Activated T-helper 2 cell treated with anti-CD3 and anti-CD28 coated beads, Interferon-gamma antibody, Interleukin-2, Interleukin-4, amounts not matched to agents 10 μg/mL and 5 μg/mL and 100 μg/mL, durations not matched to agents 14 hours and 24 hours and 36 hours (primary cell): ENCODE measurements at regions of chr11 and their contacts with region 1.

Region 1: GRCh38 chr11:15819679-15820286 is 536.6 kb downstream of the SOX6 start:
- DNase-seq: peak; percentile 12
- H3K4me3 Mint-ChIP-seq: no peak overlapping the region
- H3K27ac Mint-ChIP-seq: peak overlapping the region; percentile 61
- H3K4me1 Mint-ChIP-seq: peaks cover 43% of the 10 kb centered on the region
- H3K27me3 Mint-ChIP-seq: peaks cover 2% of the 10 kb centered on the region

Region 2: GRCh38 chr11:15650105-15650938 is 169.5 kb before region 1 on chr11:
- intact Hi-C with region 1: loop called (anchors 2 kb)
- DNase-seq: peak; percentile 68
- H3K4me3 Mint-ChIP-seq: no peak overlapping the region
- H3K27ac Mint-ChIP-seq: no peak overlapping the region
- H3K4me1 Mint-ChIP-seq: peaks cover 3% of the 10 kb centered on the region
- H3K27me3 Mint-ChIP-seq: peaks cover 19% of the 10 kb centered on the region

Region 3: DNA sequence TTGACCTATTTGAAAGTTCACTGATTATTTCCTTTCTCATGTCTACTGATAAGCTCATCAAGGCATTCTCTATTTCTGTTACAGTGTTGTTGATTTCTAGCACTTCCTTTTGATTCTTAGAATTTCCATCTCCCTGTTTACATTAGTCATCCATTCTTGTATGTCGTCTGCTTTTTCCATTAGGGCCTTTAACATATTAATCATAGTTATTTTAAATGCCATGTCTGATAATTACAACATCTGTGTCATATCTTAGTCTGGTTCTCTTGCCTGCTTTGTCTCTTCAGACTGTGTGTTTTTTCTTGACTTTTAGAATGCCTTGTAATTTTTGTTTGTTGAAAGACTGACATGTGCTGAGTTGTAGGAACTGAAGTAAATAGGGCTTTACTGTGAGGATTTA is 65.6 kb before region 1 on chr11:
- intact Hi-C with region 1: loop called (anchors 2 kb)
- DNase-seq: no peak
- H3K4me3 Mint-ChIP-seq: no peak overlapping the region
- H3K27ac Mint-ChIP-seq: peak overlapping the region; percentile 64
- H3K4me1 Mint-ChIP-seq: peaks cover 7% of the 10 kb centered on the region
- H3K27me3 Mint-ChIP-seq: no peaks in the 10 kb centered on the region

Region 4: GRCh38 chr11:15794361-15795150 is 25.2 kb before region 1 on chr11:
- intact Hi-C with region 1: loop called (anchors 1 kb)
- DNase-seq: no peak
- H3K4me3 Mint-ChIP-seq: no peak overlapping the region
- H3K27ac Mint-ChIP-seq: peak overlapping the region; percentile 84
- H3K4me1 Mint-ChIP-seq: peaks cover 11% of the 10 kb centered on the region
- H3K27me3 Mint-ChIP-seq: no peaks in the 10 kb centered on the region

Region 5: DNA sequence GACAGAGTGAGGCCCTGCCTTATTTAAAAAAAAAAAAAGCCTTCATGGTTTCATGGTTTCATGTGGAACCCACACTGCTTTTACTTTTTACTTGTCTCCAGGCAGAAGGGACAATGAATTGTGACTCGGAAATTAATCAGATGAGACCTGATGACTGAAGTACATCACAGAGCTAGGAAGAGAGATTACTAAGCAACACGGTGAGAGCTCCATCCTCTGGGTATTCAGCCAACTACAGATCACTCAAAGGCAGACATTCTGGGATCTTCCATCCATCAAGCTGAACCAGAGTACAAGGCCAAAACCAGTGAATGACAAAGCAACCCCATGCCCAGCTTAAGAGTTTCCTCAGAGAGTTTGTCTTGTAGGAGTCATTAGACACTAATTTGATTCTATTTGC is 103.4 kb after region 1 on chr11:
- intact Hi-C with region 1: no loop called
- DNase-seq: no peak
- H3K4me3 Mint-ChIP-seq: no peak overlapping the region
- H3K27ac Mint-ChIP-seq: no peak overlapping the region
- H3K4me1 Mint-ChIP-seq: no peaks in the 10 kb centered on the region
- H3K27me3 Mint-ChIP-seq: no peaks in the 10 kb centered on the region

Region 6: DNA sequence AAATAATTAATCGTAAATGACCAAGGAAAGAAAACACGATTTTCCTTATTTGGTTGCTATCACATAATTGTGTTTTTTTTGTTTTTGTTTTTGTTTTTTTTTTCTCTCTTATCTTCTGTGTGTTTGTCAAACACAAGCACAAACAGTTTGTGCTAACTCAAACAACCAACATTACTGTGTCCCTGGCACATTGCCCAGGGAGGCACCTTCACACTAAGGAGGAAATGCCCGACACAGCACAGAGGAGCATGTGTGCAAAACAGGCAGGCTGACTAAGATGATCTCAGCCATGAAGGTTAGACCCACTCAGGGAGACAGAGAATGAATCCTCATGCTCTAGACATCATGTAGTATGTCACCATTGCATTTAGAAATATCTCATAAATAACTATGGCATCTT is 406.5 kb after region 1 on chr11:
- intact Hi-C with region 1: no loop called
- DNase-seq: no peak
- H3K4me3 Mint-ChIP-seq: no peak overlapping the region
- H3K27ac Mint-ChIP-seq: no peak overlapping the region
- H3K4me1 Mint-ChIP-seq: no peaks in the 10 kb centered on the region
- H3K27me3 Mint-ChIP-seq: no peaks in the 10 kb centered on the region

Region 7: GRCh38 chr11:16605894-16606783 is 786.4 kb after region 1 on chr11:
- intact Hi-C with region 1: loop called (anchors 2 kb)
- DNase-seq: peak; percentile 79
- H3K4me3 Mint-ChIP-seq: peak overlapping the region; percentile 74
- H3K27ac Mint-ChIP-seq: peak overlapping the region; percentile 46
- H3K4me1 Mint-ChIP-seq: peaks cover 13% of the 10 kb centered on the region
- H3K27me3 Mint-ChIP-seq: peaks cover 45% of the 10 kb centered on the region

Region 8: GRCh38 chr11:16902781-16903378 is 1083.1 kb after region 1 on chr11:
- intact Hi-C with region 1: loop called (anchors 10 kb)
- DNase-seq: no peak
- H3K4me3 Mint-ChIP-seq: peak overlapping the region; percentile 31
- H3K27ac Mint-ChIP-seq: peak overlapping the region; percentile 99
- H3K4me1 Mint-ChIP-seq: peaks cover 50% of the 10 kb centered on the region
- H3K27me3 Mint-ChIP-seq: no peaks in the 10 kb centered on the region